ENCODE measurements at regions of chr5 and their contacts with region 1.

Region 1: DNA sequence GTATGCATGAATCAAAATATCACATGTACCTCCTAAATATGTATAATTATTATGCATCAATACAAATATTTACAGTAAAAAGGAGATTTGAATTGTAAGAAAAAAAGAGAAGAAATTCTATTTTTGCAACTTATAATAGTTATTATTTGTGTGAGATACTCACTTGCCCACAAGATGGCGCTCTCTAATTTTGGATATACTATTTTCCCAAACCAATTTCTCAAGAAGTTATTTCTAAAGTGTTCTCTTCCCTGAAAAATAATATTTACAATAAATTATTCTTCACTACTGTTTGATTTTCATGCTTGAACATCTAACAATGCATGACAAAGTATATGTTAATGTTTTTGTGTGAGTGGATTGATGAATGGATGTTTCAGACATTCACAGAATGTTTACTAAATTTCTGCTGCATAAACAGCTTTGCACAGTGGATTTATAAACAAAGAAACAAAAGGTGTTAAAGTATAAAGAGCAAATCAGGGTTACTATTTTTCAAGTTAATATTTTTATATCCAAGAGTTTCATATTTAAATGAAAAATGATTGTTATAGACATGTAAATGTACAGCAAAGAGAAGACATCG is 503.4 kb downstream of the PDE4D start:
- DNase-seq: peak; percentile 49
- H3K4me3 Mint-ChIP-seq: no peak overlapping the region
- H3K27ac Mint-ChIP-seq: peak overlapping the region; percentile 46
- H3K4me1 Mint-ChIP-seq: peaks cover 16% of the 10 kb centered on the region
- H3K27me3 Mint-ChIP-seq: no peaks in the 10 kb centered on the region
- CTCF ChIP-seq: no peak

Region 2: DNA sequence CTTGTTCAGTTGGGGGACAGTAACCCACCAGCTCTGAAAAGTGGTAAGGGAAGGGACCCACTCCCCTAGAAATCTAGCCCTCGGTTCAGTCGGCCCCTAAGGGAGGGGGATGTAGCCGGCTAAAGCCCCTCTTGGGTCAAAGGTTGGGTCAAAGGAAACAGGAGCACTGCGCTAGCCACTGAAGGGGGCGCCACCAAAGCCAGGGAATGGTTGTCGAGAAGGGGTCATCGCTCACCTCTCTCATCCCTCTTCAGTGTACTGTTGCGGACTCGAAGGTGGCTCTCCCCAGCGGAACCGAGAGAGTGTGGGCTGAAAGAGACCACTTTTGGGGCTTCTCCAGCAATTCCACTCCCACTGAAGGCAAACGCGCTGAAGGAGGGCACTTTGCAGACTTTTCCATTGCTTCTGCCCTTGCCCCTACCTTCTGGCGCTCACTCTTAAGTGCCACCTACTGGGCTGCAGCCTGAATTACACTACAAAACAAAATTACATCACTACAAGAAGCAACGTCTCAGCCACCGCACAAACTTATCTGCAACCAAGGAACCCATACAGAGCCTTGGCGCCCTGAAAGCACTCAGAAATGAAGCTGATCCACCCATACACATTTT is 106.5 kb after region 1 on chr5:
- CTCF ChIA-PET with region 1: interaction called, 35 read pairs
- POLR2A ChIA-PET with region 1: no interaction called
- intact Hi-C with region 1: loop called (anchors 1 kb)
- DNase-seq: peak; percentile 38
- H3K4me3 Mint-ChIP-seq: no peak overlapping the region
- H3K27ac Mint-ChIP-seq: no peak overlapping the region
- H3K4me1 Mint-ChIP-seq: peaks cover 6% of the 10 kb centered on the region
- H3K27me3 Mint-ChIP-seq: no peaks in the 10 kb centered on the region
- CTCF ChIP-seq: peak; percentile 48

Region 3: DNA sequence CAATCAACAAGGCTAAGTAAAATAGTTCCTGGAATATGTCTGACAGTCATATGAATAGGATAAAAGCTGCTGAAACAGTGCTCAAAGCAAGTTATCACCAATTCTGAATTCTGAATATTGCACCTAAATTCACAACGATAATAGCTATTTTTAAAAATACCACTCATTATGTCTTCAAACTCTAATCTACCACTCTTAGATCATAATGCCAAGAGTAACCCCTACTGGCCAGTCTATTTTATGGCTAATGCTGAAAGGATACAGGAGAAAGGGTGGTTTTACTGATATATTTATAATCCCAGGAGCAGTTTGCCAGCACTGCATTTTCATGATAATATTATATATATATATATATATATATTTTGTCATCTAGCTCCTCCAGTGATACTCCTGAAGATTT is 270.6 kb after region 1 on chr5:
- CTCF ChIA-PET with region 1: interaction called, 27 read pairs
- POLR2A ChIA-PET with region 1: no interaction called
- intact Hi-C with region 1: loop called (anchors 2 kb)
- DNase-seq: peak; percentile 36
- H3K4me3 Mint-ChIP-seq: no peak overlapping the region
- H3K27ac Mint-ChIP-seq: no peak overlapping the region
- H3K4me1 Mint-ChIP-seq: peaks cover 28% of the 10 kb centered on the region
- H3K27me3 Mint-ChIP-seq: no peaks in the 10 kb centered on the region
- CTCF ChIP-seq: peak; percentile 42

Region 4: DNA sequence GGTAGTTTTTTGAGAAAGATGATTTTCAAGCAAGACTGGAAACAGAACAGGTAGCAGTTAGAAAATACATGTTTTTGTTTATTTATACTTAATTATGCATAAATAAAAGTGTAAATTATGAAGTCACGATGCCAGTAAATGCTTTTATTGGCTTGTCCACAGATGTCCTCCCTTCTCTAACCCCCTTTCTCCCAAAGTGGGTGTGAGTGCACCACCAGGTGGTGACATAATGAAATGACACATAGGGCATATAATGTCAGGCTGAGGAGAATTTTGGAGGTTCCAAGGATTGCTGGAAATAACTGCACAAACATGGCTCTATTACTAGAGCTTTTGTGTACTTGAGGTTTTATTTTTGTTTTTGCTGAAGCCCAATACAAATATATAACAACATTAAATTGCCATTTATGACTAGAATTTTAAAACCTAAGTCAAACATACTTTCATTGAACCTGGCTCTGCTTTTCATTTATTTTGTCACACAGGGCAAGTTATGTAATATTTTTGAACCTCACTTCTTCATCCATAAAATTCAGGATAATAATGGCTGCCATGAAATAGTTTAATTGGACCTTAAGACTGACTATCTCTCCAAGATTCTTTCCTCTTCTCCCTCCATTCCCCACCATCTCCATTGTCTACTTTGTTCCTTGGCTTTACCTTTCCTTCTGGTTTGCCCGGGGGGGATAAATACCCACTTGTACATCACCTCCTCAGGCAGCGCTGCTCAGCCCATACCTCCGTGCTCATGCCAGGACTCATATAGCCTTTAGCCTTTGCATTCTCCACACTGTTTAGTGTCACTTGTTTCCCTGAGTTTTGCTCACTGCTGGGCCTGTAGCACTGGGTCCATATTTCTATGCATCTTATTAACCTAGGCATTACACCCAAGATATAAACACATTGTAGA is 334.6 kb after region 1 on chr5:
- CTCF ChIA-PET with region 1: no interaction called
- POLR2A ChIA-PET with region 1: no interaction called
- intact Hi-C with region 1: loop called (anchors 2 kb)
- DNase-seq: peak; percentile 80
- H3K4me3 Mint-ChIP-seq: no peak overlapping the region
- H3K27ac Mint-ChIP-seq: no peak overlapping the region
- H3K4me1 Mint-ChIP-seq: peaks cover 26% of the 10 kb centered on the region
- H3K27me3 Mint-ChIP-seq: no peaks in the 10 kb centered on the region
- CTCF ChIP-seq: peak; percentile 76

Region 5: GRCh38 chr5:59799668-59800346 is 409.6 kb after region 1 on chr5:
- CTCF ChIA-PET with region 1: interaction called, 15 read pairs
- POLR2A ChIA-PET with region 1: interaction called, 4 read pairs
- intact Hi-C with region 1: no loop called
- DNase-seq: peak; percentile 77
- H3K4me3 Mint-ChIP-seq: no peak overlapping the region
- H3K27ac Mint-ChIP-seq: no peak overlapping the region
- H3K4me1 Mint-ChIP-seq: no peaks in the 10 kb centered on the region
- H3K27me3 Mint-ChIP-seq: no peaks in the 10 kb centered on the region
- CTCF ChIP-seq: peak; percentile 67